HEK293T (cell line): ENCODE measurements at regions of chr17 and their contacts with region 1.

Region 1: GRCh38 chr17:33401249-33401648 is 108.2 kb upstream of the ASIC2 start:
- DNase-seq: no peak

Region 2: DNA sequence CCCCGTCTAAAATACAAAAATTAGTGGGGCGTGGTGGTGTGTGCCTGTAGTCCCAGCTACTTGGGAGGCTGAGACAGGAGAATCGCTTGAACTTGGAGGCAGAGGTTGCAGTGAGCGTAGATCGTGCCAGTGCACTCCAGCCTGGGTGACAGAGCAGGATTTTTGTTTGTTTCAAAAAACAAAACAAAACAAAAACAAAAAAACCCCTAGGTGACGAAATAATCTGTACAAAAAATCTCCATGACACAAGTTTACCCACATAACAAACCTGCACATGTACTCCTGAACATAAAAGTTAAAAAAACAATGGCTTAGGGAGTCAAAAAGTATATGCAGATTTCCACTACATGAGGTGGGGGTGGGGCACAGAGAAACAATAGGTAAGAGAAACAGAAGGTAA is 32.3 kb after region 1 on chr17:
- CTCF ChIA-PET with region 1: no interaction called
- POLR2A ChIA-PET with region 1: no interaction called
- DNase-seq: no peak

Region 3: GRCh38 chr17:33593991-33594390 is 192.7 kb after region 1 on chr17:
- CTCF ChIA-PET with region 1: interaction called, 10 read pairs
- POLR2A ChIA-PET with region 1: no interaction called
- DNase-seq: no peak